CD4-positive, alpha-beta T cell (primary cell): ENCODE measurements at regions of chr10 and their contacts with region 1.

Region 1: GRCh38 chr10:78972947-78973900 is 95.5 kb upstream of the ZMIZ1 start:
- DNase-seq: peak; percentile 14 to 86 (median 52)
- ATAC-seq: peak; percentile 69
- H3K4me3 ChIP-seq: peak overlapping the region; percentile 56
- H3K4me3 Mint-ChIP-seq: peak overlapping the region; percentile 91
- H3K27ac ChIP-seq: no peak overlapping the region
- H3K27ac Mint-ChIP-seq: peak overlapping the region; percentile 69
- H3K4me1 ChIP-seq: peaks cover 19% of the 10 kb centered on the region
- H3K4me1 Mint-ChIP-seq: peaks cover 15% of the 10 kb centered on the region
- H3K27me3 ChIP-seq: no peaks in the 10 kb centered on the region
- H3K27me3 Mint-ChIP-seq: no peaks in the 10 kb centered on the region
- CTCF ChIP-seq: no peak

Region 2: GRCh38 chr10:78892293-78893176 is 80.7 kb before region 1 on chr10:
- CTCF ChIA-PET with region 1: no interaction called
- POLR2A ChIA-PET with region 1: no interaction called
- intact Hi-C with region 1: no loop called
- DNase-seq: no peak
- ATAC-seq: no peak
- H3K4me3 ChIP-seq: no peak overlapping the region
- H3K4me3 Mint-ChIP-seq: no peak overlapping the region
- H3K27ac ChIP-seq: no peak overlapping the region
- H3K27ac Mint-ChIP-seq: no peak overlapping the region
- H3K4me1 ChIP-seq: no peaks in the 10 kb centered on the region
- H3K4me1 Mint-ChIP-seq: no peaks in the 10 kb centered on the region
- H3K27me3 ChIP-seq: no peaks in the 10 kb centered on the region
- H3K27me3 Mint-ChIP-seq: no peaks in the 10 kb centered on the region
- CTCF ChIP-seq: no peak

Region 3: DNA sequence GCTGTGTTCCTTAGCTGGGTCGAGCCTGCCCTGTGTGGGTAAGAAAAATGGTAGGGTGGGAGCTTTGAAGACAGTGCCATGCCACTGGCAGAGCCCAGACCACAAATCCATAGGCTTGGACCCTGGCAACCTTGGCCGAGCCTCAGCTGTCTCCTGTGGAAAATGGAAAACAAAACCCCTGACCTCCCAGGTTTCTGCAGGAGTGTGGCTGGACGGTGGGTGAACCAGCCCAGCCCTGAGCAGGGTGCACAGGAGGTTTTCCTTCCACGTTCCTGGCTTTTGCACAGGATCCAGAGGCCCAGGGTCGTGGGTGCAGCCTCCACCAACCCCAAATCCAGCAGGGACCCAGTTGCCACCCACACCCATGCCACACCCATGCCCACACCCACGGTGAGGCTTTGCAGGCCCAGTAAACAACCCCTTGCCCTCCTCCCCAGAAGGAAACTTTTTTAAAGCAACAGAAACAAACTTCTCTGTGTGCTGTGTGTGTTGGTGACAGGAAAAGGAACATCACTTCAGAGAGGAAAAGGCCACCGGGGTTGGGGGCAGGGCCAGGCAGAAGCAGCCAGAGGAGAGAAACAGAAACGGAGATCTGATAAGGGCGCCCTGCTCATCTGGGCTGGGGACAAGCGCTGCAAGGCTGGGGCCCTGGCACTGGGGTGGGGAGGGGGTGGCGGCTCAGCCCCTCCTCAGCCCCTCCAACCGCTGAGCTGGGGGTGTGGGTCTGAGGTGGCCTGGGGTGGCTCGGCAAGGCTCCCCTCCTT is 74.8 kb after region 1 on chr10:
- CTCF ChIA-PET with region 1: no interaction called
- POLR2A ChIA-PET with region 1: interaction called, 4 read pairs
- intact Hi-C with region 1: loop called in 1 of 2 experiments (anchors 2 kb)
- DNase-seq: peak; percentile 34 to 86 (median 69)
- ATAC-seq: peak; percentile 74
- H3K4me3 ChIP-seq: peak overlapping the region; percentile 61
- H3K4me3 Mint-ChIP-seq: peak overlapping the region; percentile 66
- H3K27ac ChIP-seq: peak overlapping the region; percentile 81 to 93
- H3K27ac Mint-ChIP-seq: peak overlapping the region; percentile 86
- H3K4me1 ChIP-seq: peaks cover 90% of the 10 kb centered on the region
- H3K4me1 Mint-ChIP-seq: peaks cover 89% of the 10 kb centered on the region
- H3K27me3 ChIP-seq: no peaks in the 10 kb centered on the region
- H3K27me3 Mint-ChIP-seq: no peaks in the 10 kb centered on the region
- CTCF ChIP-seq: no peak